CD4-positive, alpha-beta memory T cell (primary cell): ENCODE measurements at regions of chr9 and their contacts with region 1.

Region 1: DNA sequence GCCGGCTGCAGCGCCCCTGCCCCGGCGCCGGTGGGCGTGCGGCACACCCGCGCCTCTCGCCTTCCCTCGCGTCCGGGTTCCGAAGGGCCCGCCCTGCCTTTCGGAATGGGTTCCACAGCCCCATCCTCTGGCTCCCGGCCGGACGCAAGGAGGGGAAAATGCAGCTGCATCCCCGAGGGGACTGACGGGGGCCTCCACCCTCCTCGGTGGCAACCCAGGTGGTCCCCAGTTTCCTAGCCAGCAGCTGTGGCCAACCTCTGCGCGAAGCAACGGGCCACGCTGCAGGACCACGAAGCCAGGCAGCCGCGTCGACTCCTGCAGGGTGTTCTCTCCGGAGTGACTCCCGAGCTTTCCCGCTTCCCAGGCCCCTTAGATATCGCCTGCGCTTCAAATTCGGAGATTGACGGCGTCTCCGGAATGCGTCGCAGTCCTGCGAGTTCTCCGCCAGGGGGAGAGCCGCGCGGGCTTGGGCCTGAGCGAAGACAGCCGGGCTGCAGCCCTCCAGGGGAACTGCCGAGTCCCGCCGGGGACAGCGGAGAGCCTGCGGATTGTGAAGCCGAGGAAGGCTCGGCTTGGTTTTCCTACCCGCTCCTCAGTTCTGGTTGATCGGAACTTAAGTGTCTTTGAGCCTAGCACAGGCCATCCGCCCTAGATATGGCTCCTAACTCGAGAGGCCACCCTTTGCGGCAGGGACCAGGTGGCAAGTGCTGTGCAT is 582 bp upstream of the APBA1 start:
- DNase-seq: peak; percentile 55 to 70 (median 63)
- H3K4me3 ChIP-seq: peak overlapping the region in 1 of 2 donors; percentile 74
- H3K4me3 Mint-ChIP-seq: peak overlapping the region; percentile 80 to 88 (median 82)
- H3K27ac ChIP-seq: no peak overlapping the region
- H3K27ac Mint-ChIP-seq: peak overlapping the region in 2 of 7 donors; percentile 49 to 75
- H3K4me1 ChIP-seq: peaks cover 12% of the 10 kb centered on the region
- H3K4me1 Mint-ChIP-seq: peaks cover 12 to 29% (median 18%) of the 10 kb centered on the region in 4 donors
- H3K27me3 ChIP-seq: peaks cover 6% of the 10 kb centered on the region
- H3K27me3 Mint-ChIP-seq: peaks cover 12 to 22% of the 10 kb centered on the region in 2 donors

Region 2: GRCh38 chr9:69657269-69657668 is 15.5 kb before region 1 on chr9:
- CTCF ChIA-PET with region 1: interaction called, 11 read pairs
- POLR2A ChIA-PET with region 1: no interaction called
- intact Hi-C with region 1: no loop called
- DNase-seq: no peak
- H3K4me3 ChIP-seq: no peak overlapping the region
- H3K4me3 Mint-ChIP-seq: no peak overlapping the region
- H3K27ac ChIP-seq: no peak overlapping the region
- H3K27ac Mint-ChIP-seq: no peak overlapping the region
- H3K4me1 ChIP-seq: no peaks in the 10 kb centered on the region
- H3K4me1 Mint-ChIP-seq: no peaks in the 10 kb centered on the region
- H3K27me3 ChIP-seq: no peaks in the 10 kb centered on the region
- H3K27me3 Mint-ChIP-seq: peaks cover 3% of the 10 kb centered on the region in 2 donors

Region 3: GRCh38 chr9:69759421-69760277 is 86.9 kb after region 1 on chr9 and contains the start of gene PTAR1:
- CTCF ChIA-PET with region 1: no interaction called
- POLR2A ChIA-PET with region 1: interaction called, 9 read pairs
- intact Hi-C with region 1: loop called (anchors 1 kb)
- DNase-seq: peak; percentile 84 to 91 (median 88)
- H3K4me3 ChIP-seq: peak within 1 kb of the TSS; percentile 73 to 81
- H3K4me3 Mint-ChIP-seq: peak within 1 kb of the TSS; percentile 89 to 98 (median 96)
- H3K27ac ChIP-seq: peak within 1 kb of the TSS; percentile 85
- H3K27ac Mint-ChIP-seq: peak within 1 kb of the TSS; percentile 93 to 97 (median 95)
- H3K4me1 ChIP-seq: peaks cover 39% of the 10 kb centered on the region
- H3K4me1 Mint-ChIP-seq: peaks cover 21 to 47% (median 33%) of the 10 kb centered on the region in 4 donors
- H3K27me3 ChIP-seq: no peaks in the 10 kb centered on the region
- H3K27me3 Mint-ChIP-seq: no peaks in the 10 kb centered on the region
- total RNA-seq, gene PTAR1: 79.8 to 80.0 TPM